A673 (cell line): ENCODE measurements at regions of chr7 and their contacts with region 1.

Region 1: GRCh38 chr7:29207162-29207801 is 12.7 kb downstream of the CHN2 start:
- DNase-seq: peak; percentile 53
- H3K4me3 ChIP-seq: no peak overlapping the region
- H3K27ac ChIP-seq: no peak overlapping the region
- H3K4me1 ChIP-seq: peaks cover 48% of the 10 kb centered on the region
- H3K27me3 ChIP-seq: no peaks in the 10 kb centered on the region
- CTCF ChIP-seq: no peak

Region 2: GRCh38 chr7:28738412-28738811 is 468.9 kb before region 1 on chr7:
- CTCF ChIA-PET with region 1: no interaction called
- POLR2A ChIA-PET with region 1: no interaction called
- intact Hi-C with region 1: no loop called
- DNase-seq: no peak
- H3K4me3 ChIP-seq: no peak overlapping the region
- H3K27ac ChIP-seq: no peak overlapping the region
- H3K4me1 ChIP-seq: peaks cover 8% of the 10 kb centered on the region
- H3K27me3 ChIP-seq: no peaks in the 10 kb centered on the region
- CTCF ChIP-seq: no peak

Region 3: DNA sequence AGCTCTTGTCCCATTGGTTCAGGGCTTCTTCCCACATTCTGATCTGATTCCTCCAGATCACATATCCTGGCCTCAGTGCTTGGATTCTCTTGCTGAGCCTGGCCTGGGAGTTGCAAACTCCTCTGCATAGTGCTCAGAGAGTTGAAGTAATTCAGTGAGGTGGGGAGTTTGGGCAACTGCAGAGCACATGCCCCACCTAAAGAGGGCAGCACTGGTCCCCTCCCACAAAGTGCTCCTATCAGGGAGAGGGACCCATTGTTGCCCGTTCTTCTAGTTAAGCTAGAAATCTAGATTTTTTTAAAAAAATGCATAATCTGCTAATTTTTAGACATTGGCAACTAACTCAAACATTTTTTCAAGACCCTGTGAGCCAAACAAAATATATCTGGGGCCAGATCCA is 32.4 kb after region 1 on chr7:
- CTCF ChIA-PET with region 1: no interaction called
- POLR2A ChIA-PET with region 1: interaction called, 16 read pairs
- intact Hi-C with region 1: no loop called
- DNase-seq: no peak
- H3K4me3 ChIP-seq: no peak overlapping the region
- H3K27ac ChIP-seq: no peak overlapping the region
- H3K4me1 ChIP-seq: no peaks in the 10 kb centered on the region
- H3K27me3 ChIP-seq: no peaks in the 10 kb centered on the region
- CTCF ChIP-seq: peak; percentile 51

Region 4: DNA sequence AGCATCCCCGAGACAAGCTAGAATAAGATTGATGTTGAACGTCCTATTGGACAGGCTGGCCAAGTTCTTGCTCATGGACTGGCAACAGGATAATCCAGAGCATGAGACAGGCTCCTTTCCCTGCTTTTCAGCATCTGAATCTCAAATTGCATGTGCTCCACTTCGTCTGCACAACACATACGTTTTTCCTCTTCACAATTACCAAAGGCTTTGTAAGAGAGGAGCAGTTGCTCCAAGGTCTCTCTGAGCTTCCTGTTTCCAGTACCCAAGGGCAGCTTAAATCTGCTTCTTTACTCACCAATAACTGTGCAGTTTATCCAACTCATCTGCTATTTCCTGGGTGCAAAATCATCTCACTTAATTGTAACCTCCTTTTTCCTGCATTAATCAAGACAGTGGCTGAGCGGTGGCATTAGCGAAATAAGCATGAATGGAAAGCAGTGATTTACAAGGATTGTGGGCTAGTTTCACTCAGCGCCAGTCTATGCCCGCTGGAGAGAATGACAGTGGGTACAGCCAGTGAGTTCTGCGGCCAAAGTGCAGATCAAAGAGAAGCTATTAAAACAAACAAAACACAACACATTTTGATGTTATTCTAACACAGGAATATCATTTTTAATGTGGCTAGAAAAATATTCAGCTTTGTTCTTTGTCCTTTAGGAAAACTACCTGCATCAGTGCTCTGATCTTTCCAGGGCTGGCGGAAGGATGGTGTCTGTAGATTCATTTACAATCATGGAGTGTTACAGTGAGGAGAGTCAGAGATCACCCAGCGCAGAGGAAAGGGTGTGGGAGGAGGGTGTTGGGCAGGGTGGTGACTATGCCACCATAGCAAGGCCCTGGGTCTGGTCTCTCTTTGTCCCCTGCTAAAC is 67.1 kb after region 1 on chr7:
- CTCF ChIA-PET with region 1: no interaction called
- POLR2A ChIA-PET with region 1: no interaction called
- intact Hi-C with region 1: loop called (anchors 5 kb)
- DNase-seq: peak; percentile 85
- H3K4me3 ChIP-seq: no peak overlapping the region
- H3K27ac ChIP-seq: peak overlapping the region; percentile 72
- H3K4me1 ChIP-seq: peaks cover 96% of the 10 kb centered on the region
- H3K27me3 ChIP-seq: no peaks in the 10 kb centered on the region
- CTCF ChIP-seq: no peak

Region 5: GRCh38 chr7:29424295-29424983 is 217.2 kb after region 1 on chr7:
- CTCF ChIA-PET with region 1: no interaction called
- POLR2A ChIA-PET with region 1: no interaction called
- intact Hi-C with region 1: no loop called
- DNase-seq: no peak
- H3K4me3 ChIP-seq: no peak overlapping the region
- H3K27ac ChIP-seq: no peak overlapping the region
- H3K4me1 ChIP-seq: no peaks in the 10 kb centered on the region
- H3K27me3 ChIP-seq: no peaks in the 10 kb centered on the region
- CTCF ChIP-seq: no peak

Region 6: DNA sequence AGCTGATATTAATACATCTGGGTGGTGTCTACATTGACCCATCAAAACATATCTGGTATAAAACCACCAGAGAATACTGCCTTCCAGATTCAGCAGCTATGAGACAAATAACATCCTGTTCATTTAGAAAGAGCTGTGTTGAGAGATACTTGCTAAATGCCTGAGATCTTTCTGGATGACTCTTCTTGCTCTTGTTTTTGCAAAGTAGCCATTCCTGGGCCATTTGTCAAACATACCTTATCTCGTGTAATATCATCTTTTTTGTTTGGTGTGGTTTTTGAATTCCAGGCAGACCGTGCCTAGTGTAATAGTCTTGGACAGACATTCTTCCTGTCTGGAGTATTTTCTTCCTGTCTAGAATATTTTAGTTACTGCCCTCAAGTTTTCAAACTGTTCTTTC is 281.7 kb after region 1 on chr7:
- CTCF ChIA-PET with region 1: no interaction called
- POLR2A ChIA-PET with region 1: no interaction called
- intact Hi-C with region 1: no loop called
- DNase-seq: no peak
- H3K4me3 ChIP-seq: no peak overlapping the region
- H3K27ac ChIP-seq: no peak overlapping the region
- H3K4me1 ChIP-seq: peaks cover 19% of the 10 kb centered on the region
- H3K27me3 ChIP-seq: no peaks in the 10 kb centered on the region
- CTCF ChIP-seq: no peak